Heart left ventricle (tissue), 16 donors: ENCODE measurements at regions of chr4 and their contacts with region 1.

Region 1: GRCh38 chr4:151015459-151016347 is 619 bp upstream of the LRBA start:
- DNase-seq: peak; percentile 68 to 86 (median 77)
- ATAC-seq: peak; percentile 31 to 94 (median 89)
- H3K4me3 ChIP-seq: peak overlapping the region; percentile 84 to 100 (median 98)
- H3K27ac ChIP-seq: peak overlapping the region; percentile 74 to 95 (median 89)
- H3K4me1 ChIP-seq: peaks cover 0 to 25% (median 17%) of the 10 kb centered on the region in 12 donors
- H3K27me3 ChIP-seq: no peaks in the 10 kb centered on the region
- CTCF ChIP-seq: no peak
- POLR2A ChIP-seq: peak in 1 of 2 donors; percentile 61

Region 2: DNA sequence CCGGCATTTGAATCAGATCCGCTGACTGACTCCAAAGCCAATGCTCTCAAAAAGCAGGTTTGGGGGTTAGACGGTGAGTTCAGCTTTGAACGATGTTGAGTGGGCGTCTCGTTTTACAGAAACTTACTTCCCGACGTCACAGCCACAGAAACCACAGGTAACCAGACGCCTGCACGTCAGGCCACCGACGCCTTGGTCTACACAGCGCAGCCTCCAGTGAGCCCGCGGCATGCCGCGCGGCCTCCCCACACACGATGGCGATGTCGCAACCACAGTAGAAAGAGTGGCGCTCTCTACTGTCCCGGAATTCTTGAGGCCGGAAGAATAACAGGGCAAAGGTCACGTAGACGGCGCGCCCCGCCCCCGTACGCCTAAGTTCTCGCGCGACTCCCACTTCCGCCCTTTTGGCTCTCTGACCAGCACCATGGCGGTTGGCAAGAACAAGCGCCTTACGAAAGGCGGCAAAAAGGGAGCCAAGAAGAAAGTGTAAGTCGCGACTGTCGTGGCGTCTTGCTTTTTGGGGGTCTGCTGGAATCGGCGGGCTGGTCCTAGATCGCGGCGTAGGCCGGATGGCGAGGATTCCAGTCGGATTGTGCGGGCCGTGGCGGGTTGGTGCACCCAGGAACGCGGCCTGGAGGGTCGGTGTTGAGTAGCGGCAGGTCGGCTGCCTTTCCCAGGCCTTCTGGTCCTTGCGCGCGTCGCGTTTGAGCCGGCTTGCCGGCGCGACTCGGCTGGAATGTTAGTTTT is 83.7 kb after region 1 on chr4 and contains the start of gene RPS3A:
- intact Hi-C with region 1: loop called in 1 of 10 experiments (anchors 5 kb)
- DNase-seq: peak; percentile 95 to 97 (median 96)
- ATAC-seq: peak; percentile 96 to 98 (median 98)
- H3K4me3 ChIP-seq: peak within 1 kb of the TSS; percentile 58 to 87 (median 76)
- H3K27ac ChIP-seq: peak within 1 kb of the TSS; percentile 68 to 95 (median 81)
- H3K4me1 ChIP-seq: peaks cover 3 to 39% (median 17%) of the 10 kb centered on the region in 12 donors
- H3K27me3 ChIP-seq: no peaks in the 10 kb centered on the region
- CTCF ChIP-seq: peak; percentile 64 to 98 (median 84)
- POLR2A ChIP-seq: peak in 1 of 2 donors; percentile 74
- total RNA-seq, gene RPS3A: 726 to 1,370 (median 984) TPM